Right lobe of liver (tissue), 6 donors: ENCODE measurements at regions of chr1 and their contacts with region 1.

Region 1: DNA sequence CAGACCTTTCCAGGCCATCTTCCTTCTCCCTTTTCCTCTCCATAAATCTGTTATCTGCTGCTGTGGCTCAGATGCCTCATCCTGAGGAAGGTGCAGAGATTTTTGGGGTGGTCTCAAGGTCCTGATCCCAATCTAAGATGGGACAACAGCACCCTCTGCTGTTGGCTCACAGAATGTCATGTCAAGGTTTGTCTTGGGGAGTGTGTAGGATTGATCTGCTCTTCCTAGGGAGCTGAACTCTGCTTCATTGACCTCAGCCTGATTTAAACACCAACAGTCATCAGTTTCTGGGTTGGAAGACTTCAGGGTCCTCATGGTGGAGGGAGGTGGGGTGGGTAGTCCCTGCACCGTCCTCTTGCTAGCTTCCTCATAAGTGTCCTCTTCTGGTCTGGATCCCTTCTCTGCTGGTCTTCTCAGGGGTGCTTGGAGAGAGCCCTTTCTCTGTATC is 62.8 kb upstream of the LAX1 start:
- DNase-seq: no peak
- ATAC-seq: peak; percentile 72 to 87 (median 81)
- H3K4me3 ChIP-seq: no peak overlapping the region
- H3K27ac ChIP-seq: no peak overlapping the region
- H3K4me1 ChIP-seq: no peaks in the 10 kb centered on the region
- H3K27me3 ChIP-seq: no peaks in the 10 kb centered on the region
- CTCF ChIP-seq: peak; percentile 79 to 92 (median 82)
- POLR2A ChIP-seq: no peak

Region 2: DNA sequence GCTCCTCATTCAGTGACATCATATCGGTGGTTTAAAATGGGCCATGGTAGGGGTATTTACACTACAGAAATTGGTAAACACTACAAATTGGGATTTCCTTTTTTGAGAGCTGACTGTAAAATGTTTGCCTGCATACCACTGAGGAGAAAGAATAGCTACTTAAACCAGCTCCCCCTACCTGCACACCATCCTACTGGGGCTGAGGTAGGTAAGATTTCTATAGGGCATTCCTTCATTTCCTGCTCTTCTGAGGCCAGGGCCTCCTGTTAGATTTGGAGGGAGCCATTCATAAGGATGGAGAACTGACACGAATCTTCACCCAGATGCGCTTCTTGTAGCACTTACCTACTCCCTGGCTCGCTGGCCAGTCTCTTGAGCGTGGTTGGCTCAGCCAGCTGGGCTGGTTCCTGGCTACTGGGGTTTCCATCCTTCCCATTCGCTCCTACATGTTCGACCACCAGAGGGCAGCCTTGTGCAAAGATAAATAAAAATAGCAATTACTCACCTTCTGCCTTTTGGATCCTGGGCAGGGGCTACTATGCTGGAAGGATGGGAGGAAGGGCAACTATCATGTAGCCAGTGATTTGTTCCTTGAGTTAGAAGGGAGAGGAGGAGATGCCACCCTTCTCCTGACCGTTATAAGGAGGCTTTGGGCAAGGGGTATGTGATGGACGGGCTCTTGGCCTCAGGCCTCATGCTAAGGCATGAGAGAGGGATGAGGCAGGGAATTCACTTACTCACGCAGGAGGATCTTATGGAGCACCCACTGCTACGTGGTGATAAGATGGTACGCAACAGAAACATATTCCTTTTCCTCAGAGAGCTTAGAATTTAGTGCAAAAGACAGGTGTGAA is 197.5 kb before region 1 on chr1:
- intact Hi-C with region 1: loop called (anchors 5 kb)
- DNase-seq: peak; percentile 76 to 79 (median 78)
- ATAC-seq: peak; percentile 85 to 93 (median 90)
- H3K4me3 ChIP-seq: no peak overlapping the region
- H3K27ac ChIP-seq: no peak overlapping the region
- H3K4me1 ChIP-seq: no peaks in the 10 kb centered on the region
- H3K27me3 ChIP-seq: no peaks in the 10 kb centered on the region
- CTCF ChIP-seq: peak; percentile 82 to 88 (median 85)
- POLR2A ChIP-seq: no peak